Activated CD8-positive, alpha-beta T cell treated with anti-CD3 and anti-CD28 coated beads for 36 hours (primary cell): ENCODE measurements at regions of chr2 and their contacts with region 1.

Region 1: DNA sequence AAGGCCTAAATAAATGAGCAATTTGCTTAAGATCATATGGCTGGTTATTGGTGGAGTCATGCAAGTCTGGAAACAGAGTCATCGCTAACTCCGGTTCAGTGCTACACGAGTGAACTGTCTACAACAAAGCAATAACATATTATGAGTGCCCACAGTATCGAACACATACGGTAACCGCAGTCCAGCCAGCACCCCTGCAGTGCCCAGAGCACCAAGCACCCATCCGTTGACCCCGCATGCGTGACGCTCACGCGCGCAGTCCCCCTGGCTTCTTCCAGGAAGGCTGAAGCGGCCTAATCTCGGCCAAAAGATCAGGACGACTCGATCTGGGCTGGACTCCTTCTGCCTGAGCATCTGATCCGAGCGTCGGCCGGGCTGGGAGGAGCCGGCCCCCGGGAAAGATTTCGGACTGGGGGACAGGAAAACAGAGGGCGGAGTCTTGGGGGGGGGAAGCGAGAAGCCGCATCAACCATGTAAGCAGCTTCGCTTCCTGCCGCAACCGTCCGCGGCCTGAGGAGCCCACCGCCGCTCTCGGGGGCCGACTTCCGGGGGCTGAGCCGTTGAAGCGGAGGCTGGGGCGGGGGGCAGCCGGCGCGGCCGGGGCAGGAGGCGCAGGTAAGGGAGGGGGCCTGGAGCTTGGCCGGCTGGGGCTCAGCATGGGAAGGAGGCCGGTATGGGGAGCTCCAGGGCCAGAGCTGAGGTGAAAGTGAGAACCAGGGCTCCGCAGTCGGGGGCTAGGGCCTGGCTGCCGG is at the start of gene PIKFYVE:
- DNase-seq: peak; percentile 95
- ATAC-seq: peak; percentile 91
- H3K4me3 Mint-ChIP-seq: peak within 1 kb of the TSS; percentile 87
- H3K27ac Mint-ChIP-seq: peak within 1 kb of the TSS; percentile 95
- H3K4me1 Mint-ChIP-seq: peaks cover 27% of the 10 kb centered on the region
- H3K27me3 Mint-ChIP-seq: no peaks in the 10 kb centered on the region
- CTCF ChIP-seq: no peak
- total RNA-seq, gene PIKFYVE: 16.4 to 16.9 TPM

Region 2: DNA sequence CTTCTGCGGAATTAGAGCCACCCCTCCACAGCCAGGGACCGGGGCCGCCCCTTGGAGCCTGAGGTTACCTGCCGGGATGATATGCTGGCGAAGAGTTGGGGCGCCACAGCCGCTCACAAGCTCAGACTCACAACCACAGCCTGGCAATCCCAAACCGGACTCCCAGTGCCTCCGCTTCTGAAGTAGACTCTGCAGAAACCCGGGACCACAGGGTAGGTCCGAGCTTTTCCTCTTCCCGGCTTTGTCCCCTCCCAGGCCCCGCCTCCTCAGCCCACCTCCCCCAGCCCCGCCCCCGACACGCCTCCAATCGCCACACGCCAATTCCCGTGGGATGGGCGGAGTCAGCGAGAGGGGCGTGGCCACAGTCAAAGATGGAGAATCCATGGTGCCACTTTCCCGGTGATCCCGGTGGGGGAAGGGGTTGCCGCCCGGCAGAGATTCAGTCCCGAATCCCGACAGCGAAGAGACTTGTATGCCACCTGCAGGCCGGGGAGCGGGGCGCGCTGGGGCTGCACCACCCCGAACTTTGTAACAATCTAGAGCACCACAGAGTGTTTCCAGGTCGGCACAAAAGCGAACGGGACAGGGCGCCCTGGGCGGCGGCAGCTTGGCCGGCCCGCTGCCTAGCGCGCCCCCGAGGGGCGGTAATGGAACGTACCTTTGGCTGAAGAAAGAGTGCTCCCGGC is 11.0 kb before region 1 on chr2 and contains the start of gene IDH1:
- CTCF ChIA-PET with region 1: interaction called, 77 read pairs
- POLR2A ChIA-PET with region 1: interaction called, 8 read pairs
- intact Hi-C with region 1: no loop called
- DNase-seq: peak; percentile 96
- ATAC-seq: peak; percentile 85
- H3K4me3 Mint-ChIP-seq: peak within 1 kb of the TSS; percentile 95
- H3K27ac Mint-ChIP-seq: peak within 1 kb of the TSS; percentile 79
- H3K4me1 Mint-ChIP-seq: peaks cover 20% of the 10 kb centered on the region
- H3K27me3 Mint-ChIP-seq: no peaks in the 10 kb centered on the region
- CTCF ChIP-seq: no peak
- total RNA-seq, gene IDH1: 19.0 to 19.7 TPM

Region 3: DNA sequence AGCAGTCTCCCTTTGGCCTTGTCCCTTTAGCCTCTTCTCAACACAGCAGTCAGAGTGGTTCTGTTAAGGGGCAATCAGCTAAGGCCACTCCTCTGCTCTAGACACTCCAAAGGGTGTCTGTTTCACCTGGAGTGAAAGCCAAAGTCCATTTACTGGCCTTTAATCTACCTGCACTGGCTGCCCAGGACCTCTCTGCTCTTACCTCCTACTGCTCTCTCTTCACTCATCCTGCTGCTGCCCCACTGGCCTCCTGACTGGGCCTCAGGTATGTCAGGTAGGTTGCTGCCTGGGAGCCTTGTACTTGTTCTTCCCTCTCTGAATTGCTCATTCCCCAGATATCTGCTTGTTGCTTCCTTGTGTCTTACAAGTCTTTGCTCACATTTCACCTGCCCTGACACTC is 68.3 kb after region 1 on chr2:
- CTCF ChIA-PET with region 1: no interaction called
- POLR2A ChIA-PET with region 1: no interaction called
- intact Hi-C with region 1: no loop called
- DNase-seq: no peak
- ATAC-seq: no peak
- H3K4me3 Mint-ChIP-seq: no peak overlapping the region
- H3K27ac Mint-ChIP-seq: no peak overlapping the region
- H3K4me1 Mint-ChIP-seq: no peaks in the 10 kb centered on the region
- H3K27me3 Mint-ChIP-seq: no peaks in the 10 kb centered on the region
- CTCF ChIP-seq: no peak

Region 4: DNA sequence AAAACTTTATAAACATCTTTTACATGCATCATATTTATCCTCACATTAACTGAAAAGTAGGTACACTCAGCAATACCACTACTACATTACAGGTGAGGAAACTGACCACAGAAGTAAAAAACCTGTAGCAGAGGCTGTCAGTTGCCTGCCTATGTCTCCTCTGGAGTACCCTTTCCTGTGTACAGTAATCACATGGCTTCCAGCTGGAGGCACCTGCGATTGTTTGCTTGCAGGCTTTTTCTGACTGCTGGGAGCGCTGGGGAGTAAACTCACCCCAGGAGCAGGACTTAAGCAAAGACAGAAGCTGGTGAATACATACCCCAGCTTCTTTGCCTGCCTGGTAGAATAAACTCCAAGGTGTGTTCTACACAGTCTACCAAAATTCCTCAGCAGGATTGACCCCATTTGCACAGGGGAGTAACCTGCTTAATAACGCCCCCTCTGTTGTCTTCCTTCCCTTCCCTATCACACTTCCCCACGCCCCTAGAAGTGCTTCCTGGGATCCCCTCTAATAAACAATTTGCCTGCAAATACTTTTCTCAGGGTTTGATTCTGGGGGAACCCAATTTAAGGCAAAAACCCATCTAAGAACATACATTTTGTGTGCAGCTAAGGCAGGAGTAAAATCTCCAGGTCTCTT is 279.5 kb after region 1 on chr2:
- CTCF ChIA-PET with region 1: no interaction called
- POLR2A ChIA-PET with region 1: no interaction called
- intact Hi-C with region 1: no loop called
- DNase-seq: no peak
- ATAC-seq: no peak
- H3K4me3 Mint-ChIP-seq: no peak overlapping the region
- H3K27ac Mint-ChIP-seq: no peak overlapping the region
- H3K4me1 Mint-ChIP-seq: no peaks in the 10 kb centered on the region
- H3K27me3 Mint-ChIP-seq: no peaks in the 10 kb centered on the region
- CTCF ChIP-seq: no peak